Naive thymus-derived CD4-positive, alpha-beta T cell (primary cell): ENCODE measurements at regions of chr7 and their contacts with region 1.

Region 1: DNA sequence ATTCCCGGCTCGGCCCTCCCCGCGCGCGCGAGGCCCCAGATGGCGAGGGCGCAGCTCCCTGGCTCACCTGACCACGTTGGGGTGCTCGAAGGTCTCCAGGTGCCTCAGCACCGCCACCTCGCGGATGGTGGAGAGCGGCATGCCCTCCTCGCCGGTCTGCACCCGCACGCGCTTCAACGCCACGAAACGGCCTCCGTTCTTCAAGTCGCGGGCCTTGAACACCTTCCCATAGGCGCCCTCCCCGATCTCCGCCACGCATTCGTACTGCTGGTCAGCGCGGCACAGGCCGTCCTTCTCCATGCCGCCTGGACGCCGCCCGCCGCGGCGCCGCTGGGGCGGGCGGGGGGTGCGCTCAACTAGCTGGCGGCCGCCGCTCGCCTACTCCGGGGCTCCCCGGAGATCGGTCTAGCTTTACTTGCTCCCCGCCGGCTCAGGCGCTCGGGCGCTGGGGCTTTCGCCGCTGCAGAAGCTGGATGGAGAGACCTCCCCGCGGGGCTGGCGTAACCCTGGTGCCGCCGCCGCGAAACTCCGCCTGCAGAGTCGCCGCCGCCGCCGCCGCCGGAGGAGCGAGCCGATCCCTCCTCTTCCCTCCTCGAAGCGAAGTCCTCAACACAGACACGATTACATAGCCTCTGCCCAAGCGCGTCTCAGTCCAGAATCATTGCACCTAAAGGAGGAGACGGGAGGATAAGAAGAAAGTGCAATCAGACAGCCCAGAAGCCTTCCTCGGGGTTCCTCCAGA is 3.2 kb downstream of the CDK6 start:
- DNase-seq: peak; percentile 73 to 88 (median 84)
- ATAC-seq: peak; percentile 86
- H3K4me3 ChIP-seq: peak overlapping the region; percentile 77
- H3K4me3 Mint-ChIP-seq: peak overlapping the region; percentile 91 to 99 (median 96)
- H3K27ac ChIP-seq: peak overlapping the region; percentile 73
- H3K27ac Mint-ChIP-seq: peak overlapping the region; percentile 78 to 99 (median 90)
- H3K4me1 ChIP-seq: peaks cover 27 to 29% of the 10 kb centered on the region in 2 donors
- H3K4me1 Mint-ChIP-seq: peaks cover 12 to 60% (median 51%) of the 10 kb centered on the region in 7 donors
- H3K27me3 ChIP-seq: no peaks in the 10 kb centered on the region
- H3K27me3 Mint-ChIP-seq: peaks cover 0 to 13% (median 0%) of the 10 kb centered on the region in 5 donors

Region 2: GRCh38 chr7:91940572-91941341 is 892.4 kb before region 1 on chr7 and contains the start of gene AKAP9:
- CTCF ChIA-PET with region 1: no interaction called
- POLR2A ChIA-PET with region 1: no interaction called
- intact Hi-C with region 1: loop called (anchors 2 to 10 kb)
- DNase-seq: peak; percentile 79 to 89 (median 88)
- ATAC-seq: peak; percentile 93
- H3K4me3 ChIP-seq: peak within 1 kb of the TSS; percentile 97
- H3K4me3 Mint-ChIP-seq: peak within 1 kb of the TSS; percentile 85 to 98 (median 92)
- H3K27ac ChIP-seq: peak within 1 kb of the TSS; percentile 93
- H3K27ac Mint-ChIP-seq: peak within 1 kb of the TSS; percentile 90 to 98 (median 95)
- H3K4me1 ChIP-seq: peaks cover 15 to 16% of the 10 kb centered on the region in 2 donors
- H3K4me1 Mint-ChIP-seq: peaks cover 28 to 54% (median 44%) of the 10 kb centered on the region in 7 donors
- H3K27me3 ChIP-seq: no peaks in the 10 kb centered on the region
- H3K27me3 Mint-ChIP-seq: peaks cover 0 to 2% (median 0%) of the 10 kb centered on the region in 5 donors
- total RNA-seq, gene AKAP9: 50.0 to 93.5 (median 66.1) TPM

Region 3: GRCh38 chr7:92528188-92528957 is 304.8 kb before region 1 on chr7 and contains the starts of genes PEX1 and RBM48:
- CTCF ChIA-PET with region 1: no interaction called
- POLR2A ChIA-PET with region 1: no interaction called
- intact Hi-C with region 1: loop called (anchors 1 kb)
- DNase-seq: peak; percentile 79 to 98 (median 96)
- ATAC-seq: peak; percentile 96
- H3K4me3 ChIP-seq: peak within 1 kb of the TSS; percentile 95
- H3K4me3 Mint-ChIP-seq: peak within 1 kb of the TSS; percentile 86 to 96 (median 90)
- H3K27ac ChIP-seq: peak within 1 kb of the TSS; percentile 91
- H3K27ac Mint-ChIP-seq: peak within 1 kb of the TSS; percentile 91 to 100 (median 95)
- H3K4me1 ChIP-seq: peaks cover 13 to 23% of the 10 kb centered on the region in 2 donors
- H3K4me1 Mint-ChIP-seq: peaks cover 24 to 67% (median 52%) of the 10 kb centered on the region in 7 donors
- H3K27me3 ChIP-seq: no peaks in the 10 kb centered on the region
- H3K27me3 Mint-ChIP-seq: peaks cover 0 to 2% (median 0%) of the 10 kb centered on the region in 5 donors
- total RNA-seq, gene PEX1: 18.6 to 43.3 (median 25.6) TPM
- total RNA-seq, gene RBM48: 16.9 to 42.7 (median 37.8) TPM

Region 4: GRCh38 chr7:92691578-92691977 is 141.6 kb before region 1 on chr7:
- CTCF ChIA-PET with region 1: interaction called, 10 read pairs
- POLR2A ChIA-PET with region 1: interaction called, 3 read pairs
- intact Hi-C with region 1: loop called (anchors 1 kb)
- DNase-seq: peak in 7 of 9 donors; percentile 33 to 59 (median 41)
- ATAC-seq: peak; percentile 93
- H3K4me3 ChIP-seq: no peak overlapping the region
- H3K4me3 Mint-ChIP-seq: peak overlapping the region in 4 of 10 donors; percentile 18 to 50 (median 20)
- H3K27ac ChIP-seq: no peak overlapping the region
- H3K27ac Mint-ChIP-seq: peak overlapping the region in 8 of 9 donors; percentile 1 to 75 (median 58)
- H3K4me1 ChIP-seq: peaks cover 12 to 15% of the 10 kb centered on the region in 2 donors
- H3K4me1 Mint-ChIP-seq: peaks cover 7 to 74% (median 38%) of the 10 kb centered on the region in 7 donors
- H3K27me3 ChIP-seq: no peaks in the 10 kb centered on the region
- H3K27me3 Mint-ChIP-seq: no peaks in the 10 kb centered on the region

Region 5: DNA sequence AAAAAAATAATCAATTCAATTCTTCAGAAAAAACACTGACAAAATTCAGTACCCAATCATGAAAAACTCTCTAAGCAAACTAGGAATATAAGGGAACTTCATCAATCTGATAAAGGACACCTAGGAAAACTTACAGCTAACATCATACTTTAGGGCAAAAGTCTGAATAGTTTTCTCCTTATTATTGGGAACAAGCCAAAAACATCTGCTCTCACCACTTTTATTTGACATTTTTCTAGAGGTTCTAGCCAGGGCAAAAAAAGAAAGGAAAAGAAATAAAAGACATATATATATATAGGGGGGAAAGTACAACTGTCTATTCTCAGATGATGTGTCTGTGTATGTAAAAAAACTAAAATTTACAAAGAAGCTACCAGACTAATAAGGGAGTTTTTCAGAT is 15.8 kb before region 1 on chr7:
- CTCF ChIA-PET with region 1: interaction called, 10 read pairs
- POLR2A ChIA-PET with region 1: interaction called, 4 read pairs
- intact Hi-C with region 1: loop called (anchors 1 kb)
- DNase-seq: no peak
- ATAC-seq: no peak
- H3K4me3 ChIP-seq: no peak overlapping the region
- H3K4me3 Mint-ChIP-seq: no peak overlapping the region
- H3K27ac ChIP-seq: no peak overlapping the region
- H3K27ac Mint-ChIP-seq: no peak overlapping the region
- H3K4me1 ChIP-seq: peaks cover 15 to 26% of the 10 kb centered on the region in 2 donors
- H3K4me1 Mint-ChIP-seq: peaks cover 26 to 71% (median 61%) of the 10 kb centered on the region in 7 donors
- H3K27me3 ChIP-seq: no peaks in the 10 kb centered on the region
- H3K27me3 Mint-ChIP-seq: no peaks in the 10 kb centered on the region

Region 6: GRCh38 chr7:93055543-93056107 is 222.4 kb after region 1 on chr7:
- CTCF ChIA-PET with region 1: interaction called, 3 read pairs
- POLR2A ChIA-PET with region 1: interaction called, 4 read pairs
- intact Hi-C with region 1: loop called (anchors 1 kb)
- DNase-seq: peak in 6 of 9 donors; percentile 14 to 57 (median 41)
- ATAC-seq: peak; percentile 77
- H3K4me3 ChIP-seq: no peak overlapping the region
- H3K4me3 Mint-ChIP-seq: no peak overlapping the region
- H3K27ac ChIP-seq: no peak overlapping the region
- H3K27ac Mint-ChIP-seq: no peak overlapping the region
- H3K4me1 ChIP-seq: no peaks in the 10 kb centered on the region
- H3K4me1 Mint-ChIP-seq: peaks cover 0 to 16% (median 7%) of the 10 kb centered on the region in 7 donors
- H3K27me3 ChIP-seq: no peaks in the 10 kb centered on the region
- H3K27me3 Mint-ChIP-seq: peaks cover 0 to 12% (median 6%) of the 10 kb centered on the region in 5 donors

Region 7: GRCh38 chr7:93092757-93093370 is 259.7 kb after region 1 on chr7:
- CTCF ChIA-PET with region 1: no interaction called
- POLR2A ChIA-PET with region 1: no interaction called
- intact Hi-C with region 1: no loop called
- DNase-seq: peak in 1 of 9 donors; percentile 2
- ATAC-seq: no peak
- H3K4me3 ChIP-seq: no peak overlapping the region
- H3K4me3 Mint-ChIP-seq: no peak overlapping the region
- H3K27ac ChIP-seq: no peak overlapping the region
- H3K27ac Mint-ChIP-seq: no peak overlapping the region
- H3K4me1 ChIP-seq: no peaks in the 10 kb centered on the region
- H3K4me1 Mint-ChIP-seq: no peaks in the 10 kb centered on the region
- H3K27me3 ChIP-seq: no peaks in the 10 kb centered on the region
- H3K27me3 Mint-ChIP-seq: peaks cover 10 to 37% (median 12%) of the 10 kb centered on the region in 5 donors

Region 8: DNA sequence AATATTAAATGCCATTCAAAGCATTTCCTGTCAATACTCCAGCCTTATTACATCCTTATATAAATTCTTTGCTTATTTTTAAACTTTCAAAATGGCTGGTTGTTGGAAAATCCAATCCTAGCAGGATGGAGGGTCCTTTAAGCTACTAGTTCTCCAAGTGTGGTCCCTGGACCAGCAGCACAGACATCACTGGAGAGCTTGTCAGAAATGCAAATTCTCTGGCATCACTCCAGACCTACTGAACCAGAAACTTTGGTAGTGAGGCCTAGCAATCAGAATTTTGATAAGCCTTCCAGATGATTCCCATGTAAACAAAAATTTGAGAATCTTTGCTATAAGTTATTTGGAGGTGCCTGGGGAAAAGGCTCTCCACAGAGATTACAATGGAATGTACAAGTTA is 697.5 kb after region 1 on chr7:
- CTCF ChIA-PET with region 1: no interaction called
- POLR2A ChIA-PET with region 1: no interaction called
- intact Hi-C with region 1: no loop called
- DNase-seq: no peak
- ATAC-seq: no peak
- H3K4me3 ChIP-seq: no peak overlapping the region
- H3K4me3 Mint-ChIP-seq: no peak overlapping the region
- H3K27ac ChIP-seq: no peak overlapping the region
- H3K27ac Mint-ChIP-seq: no peak overlapping the region
- H3K4me1 ChIP-seq: no peaks in the 10 kb centered on the region
- H3K4me1 Mint-ChIP-seq: no peaks in the 10 kb centered on the region
- H3K27me3 ChIP-seq: no peaks in the 10 kb centered on the region
- H3K27me3 Mint-ChIP-seq: no peaks in the 10 kb centered on the region

Region 9: DNA sequence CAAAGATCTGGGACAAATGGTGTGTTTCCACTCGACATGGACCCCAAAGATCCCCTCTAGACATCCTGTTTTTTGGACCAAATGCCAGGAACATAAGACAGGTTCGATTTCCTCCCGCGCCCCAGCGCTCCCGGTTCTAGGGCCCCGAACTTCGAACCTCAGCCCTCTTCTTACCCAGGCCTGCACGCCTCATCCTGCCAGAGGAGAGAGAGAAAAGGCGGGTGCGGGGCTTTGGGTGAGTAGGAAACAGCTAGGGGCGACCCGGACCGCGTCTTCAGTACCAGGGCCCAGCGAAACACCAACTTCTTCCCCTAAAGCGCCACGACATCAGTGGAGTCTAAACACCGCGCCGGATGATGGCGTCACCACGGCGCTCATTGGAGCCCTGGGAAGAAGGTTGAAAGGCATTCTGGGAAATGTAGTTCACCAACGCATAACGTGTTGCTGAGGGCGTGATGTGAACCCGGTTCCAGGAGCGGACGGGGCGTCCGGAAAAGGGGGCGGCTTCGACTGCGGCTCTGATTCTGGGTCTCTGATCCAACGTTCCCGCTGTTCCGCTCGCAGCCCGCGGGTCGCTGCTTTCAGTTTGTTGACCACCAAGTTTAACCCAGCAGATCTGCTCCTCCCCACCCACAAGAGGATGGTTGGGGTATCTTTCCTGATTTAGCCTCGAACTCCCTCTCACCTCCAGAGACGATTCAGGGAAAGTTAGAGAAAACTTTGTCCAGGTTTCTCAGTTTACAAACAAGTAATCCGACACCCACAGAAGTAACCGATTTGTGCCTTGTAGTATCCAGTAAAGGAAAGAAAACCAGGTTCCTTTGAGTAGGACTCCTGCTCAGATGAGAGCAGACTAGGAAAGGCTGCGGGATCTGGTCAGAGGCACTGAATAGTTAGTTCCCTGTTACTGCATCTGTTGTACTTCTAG is 1171.1 kb after region 1 on chr7 and contains the start of gene BET1:
- CTCF ChIA-PET with region 1: no interaction called
- POLR2A ChIA-PET with region 1: no interaction called
- intact Hi-C with region 1: loop called in 1 of 2 experiments (anchors 2 kb)
- DNase-seq: peak; percentile 87 to 96 (median 92)
- ATAC-seq: peak; percentile 98
- H3K4me3 ChIP-seq: peak within 1 kb of the TSS; percentile 75
- H3K4me3 Mint-ChIP-seq: peak within 1 kb of the TSS; percentile 88 to 100 (median 99)
- H3K27ac ChIP-seq: peak within 1 kb of the TSS; percentile 91
- H3K27ac Mint-ChIP-seq: peak within 1 kb of the TSS; percentile 95 to 100 (median 99)
- H3K4me1 ChIP-seq: peaks cover 3 to 17% of the 10 kb centered on the region in 2 donors
- H3K4me1 Mint-ChIP-seq: peaks cover 22 to 56% (median 51%) of the 10 kb centered on the region in 7 donors
- H3K27me3 ChIP-seq: no peaks in the 10 kb centered on the region
- H3K27me3 Mint-ChIP-seq: peaks cover 0 to 28% (median 11%) of the 10 kb centered on the region in 5 donors
- total RNA-seq, gene BET1: 9.9 to 37.6 (median 25.2) TPM